ENCODE measurements at regions of chr7 and their contacts with region 1.

Region 1: GRCh38 chr7:135428011-135428410 is 81.9 kb downstream of the CNOT4 start:
- DNase-seq: no peak
- H3K4me3 Mint-ChIP-seq: no peak overlapping the region
- H3K27ac Mint-ChIP-seq: no peak overlapping the region
- H3K4me1 Mint-ChIP-seq: peaks cover 25% of the 10 kb centered on the region
- H3K27me3 Mint-ChIP-seq: no peaks in the 10 kb centered on the region
- CTCF ChIP-seq: no peak

Region 2: DNA sequence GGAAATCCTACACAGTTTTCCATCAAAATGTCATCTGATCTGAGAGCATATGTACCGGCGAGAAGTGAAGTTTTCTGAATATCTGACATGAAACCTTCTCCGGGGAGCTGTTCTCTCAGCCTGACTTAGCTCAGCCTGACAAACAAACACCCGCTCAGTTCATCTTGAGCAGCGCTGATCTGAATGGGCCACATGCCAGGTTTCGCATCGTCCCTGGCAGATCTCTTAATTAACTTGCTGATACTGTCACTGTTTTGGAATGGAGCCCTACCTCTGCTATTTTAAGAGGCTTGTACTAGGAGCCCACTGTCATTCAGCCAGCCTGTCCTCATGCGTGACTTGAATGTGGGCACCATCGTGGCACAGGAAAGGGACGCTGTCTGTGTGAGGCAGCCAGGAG is 85.1 kb before region 1 on chr7:
- CTCF ChIA-PET with region 1: no interaction called
- intact Hi-C with region 1: no loop called
- DNase-seq: no peak
- H3K4me3 Mint-ChIP-seq: no peak overlapping the region
- H3K27ac Mint-ChIP-seq: no peak overlapping the region
- H3K4me1 Mint-ChIP-seq: no peaks in the 10 kb centered on the region
- H3K27me3 Mint-ChIP-seq: no peaks in the 10 kb centered on the region
- CTCF ChIP-seq: no peak

Region 3: DNA sequence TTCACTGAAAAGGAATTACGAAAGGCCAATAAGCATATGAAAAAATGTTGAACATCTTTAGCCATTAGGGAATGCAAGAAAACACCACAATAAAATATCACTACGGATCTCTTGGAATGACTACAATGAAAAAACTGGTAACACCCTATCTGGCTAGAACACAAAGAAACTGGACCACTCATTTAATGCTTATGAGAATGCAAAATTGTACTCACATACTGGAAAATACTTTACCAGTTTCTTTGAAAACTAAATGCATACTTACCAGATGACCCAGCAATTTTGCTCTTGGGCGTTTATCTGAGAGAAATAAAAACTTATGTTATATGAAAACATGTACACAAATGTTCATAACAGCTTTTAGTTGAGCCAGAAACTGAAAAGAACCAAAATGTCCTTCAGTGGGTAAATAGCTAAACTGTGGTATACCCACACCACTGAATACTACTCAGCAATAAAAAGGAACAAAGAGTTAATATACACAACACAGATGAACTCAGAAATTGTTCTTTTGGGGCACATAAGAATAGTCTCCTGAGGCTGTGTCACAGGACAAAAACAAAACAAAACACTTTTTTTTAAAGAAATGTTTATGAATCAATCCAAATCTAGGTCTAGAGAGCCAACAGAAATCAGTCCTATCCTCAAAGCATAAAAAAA is 58.4 kb after region 1 on chr7:
- CTCF ChIA-PET with region 1: no interaction called
- intact Hi-C with region 1: loop called (anchors 5 kb)
- DNase-seq: no peak
- H3K4me3 Mint-ChIP-seq: no peak overlapping the region
- H3K27ac Mint-ChIP-seq: no peak overlapping the region
- H3K4me1 Mint-ChIP-seq: no peaks in the 10 kb centered on the region
- H3K27me3 Mint-ChIP-seq: no peaks in the 10 kb centered on the region
- CTCF ChIP-seq: no peak

Measured in Calu3 (cell line).